GM18951 (cell line): ENCODE measurements at regions of chrX and their contacts with region 1.

Region 1: DNA sequence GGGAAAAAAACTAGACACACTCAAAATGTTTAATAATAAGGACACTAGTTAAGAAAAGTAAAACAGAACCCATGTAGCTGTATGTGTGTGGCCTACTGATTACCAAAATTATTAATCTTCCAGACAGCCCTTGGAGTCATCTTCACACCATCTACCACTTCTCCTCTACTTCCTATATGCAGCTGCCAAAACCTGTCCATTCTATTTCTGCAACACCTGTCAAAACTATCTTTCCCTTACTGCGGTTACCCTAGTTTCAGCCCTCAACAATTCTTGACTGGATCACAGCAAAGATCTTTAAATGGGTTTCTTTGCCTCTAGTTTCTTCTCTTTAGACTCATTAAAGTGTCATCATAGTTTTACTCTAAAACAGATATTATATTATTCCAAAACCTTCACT is 72.6 kb downstream of the GPR82 start:
- POLR2A ChIP-seq: no peak

Region 2: GRCh38 chrX:42943051-42943974 is 1146.7 kb after region 1 on chrX:
- in situ Hi-C with region 1: loop called (anchors 10 kb)
- POLR2A ChIP-seq: no peak